ENCODE measurements at regions of chr4 and their contacts with region 1.

Region 1: GRCh38 chr4:48370260-48371134 is 29.2 kb downstream of the SLAIN2 start:
- DNase-seq: no peak
- H3K4me3 Mint-ChIP-seq: no peak overlapping the region
- H3K27ac Mint-ChIP-seq: no peak overlapping the region
- H3K4me1 Mint-ChIP-seq: peaks cover 42% of the 10 kb centered on the region
- H3K27me3 Mint-ChIP-seq: no peaks in the 10 kb centered on the region
- CTCF ChIP-seq: no peak

Region 2: DNA sequence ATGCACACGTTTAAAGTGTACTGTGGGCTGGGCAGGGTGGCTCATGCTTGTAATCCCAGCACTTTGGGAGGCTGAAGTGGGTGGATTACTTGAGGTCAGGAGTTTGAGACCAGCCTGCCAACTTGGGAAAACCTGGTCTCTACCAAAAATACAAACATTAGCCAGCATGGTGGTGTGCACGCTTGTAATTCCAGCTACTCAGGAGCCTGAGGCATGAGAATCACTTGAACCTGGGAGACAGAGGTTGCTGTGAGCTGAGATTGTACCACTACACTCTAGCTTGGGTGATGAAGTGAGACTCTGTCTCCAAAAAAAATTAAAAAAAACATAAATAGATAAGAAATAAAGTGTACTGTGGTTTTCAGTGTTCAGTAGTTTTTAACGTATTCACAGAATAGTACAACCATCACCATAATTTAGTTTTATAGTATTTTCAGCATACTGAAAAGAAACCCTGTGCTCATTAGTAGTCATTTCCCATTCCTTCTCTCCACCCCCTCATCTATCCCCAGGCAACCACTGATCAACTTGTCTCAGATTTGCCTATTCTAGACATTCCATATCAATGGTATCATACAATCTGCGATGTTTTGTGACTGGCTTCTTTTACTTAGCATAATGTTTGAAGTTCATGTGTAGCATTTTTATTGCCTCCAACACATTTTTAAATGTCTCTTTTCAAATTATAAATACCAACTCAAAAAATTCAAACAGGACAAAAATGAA is 10.0 kb before region 1 on chr4:
- CTCF ChIA-PET with region 1: no interaction called
- POLR2A ChIA-PET with region 1: interaction called, 16 read pairs
- intact Hi-C with region 1: no loop called
- DNase-seq: peak; percentile 59
- H3K4me3 Mint-ChIP-seq: peak overlapping the region; percentile 38
- H3K27ac Mint-ChIP-seq: peak overlapping the region; percentile 82
- H3K4me1 Mint-ChIP-seq: peaks cover 24% of the 10 kb centered on the region
- H3K27me3 Mint-ChIP-seq: no peaks in the 10 kb centered on the region
- CTCF ChIP-seq: no peak

Measured in MCF 10A (cell line).